HEK293T (cell line): ENCODE measurements at regions of chr1 and their contacts with region 1.

Region 1: DNA sequence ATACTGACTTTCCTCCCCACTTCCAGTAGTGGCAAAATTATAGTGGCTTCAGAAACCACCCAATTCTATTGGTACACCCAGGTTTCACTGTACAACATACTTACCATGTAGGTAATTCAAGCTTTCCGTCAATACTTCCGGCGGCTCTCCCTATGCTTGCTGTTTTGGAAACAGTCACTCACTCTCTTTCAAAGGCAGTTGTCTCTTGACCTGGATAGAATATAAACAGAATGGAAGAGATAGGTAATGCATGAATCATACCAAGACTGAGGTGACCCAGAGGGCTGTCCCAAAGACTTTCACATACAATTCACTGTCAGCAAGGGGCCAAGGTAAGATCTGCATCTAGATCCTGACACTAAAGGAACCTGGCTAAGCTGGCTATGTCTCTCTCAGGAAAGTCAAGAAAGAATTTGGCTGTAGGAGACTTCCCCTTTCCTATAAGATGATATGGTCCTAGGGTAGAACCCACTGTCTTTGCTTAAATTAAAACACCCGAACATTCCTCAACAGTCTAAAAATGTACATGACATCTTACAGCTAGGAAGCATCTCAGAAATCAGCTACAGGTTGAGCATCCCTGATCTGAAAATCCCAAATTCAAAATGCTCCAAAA is 59.6 kb downstream of the LUZP1 start:
- DNase-seq: no peak

Region 2: DNA sequence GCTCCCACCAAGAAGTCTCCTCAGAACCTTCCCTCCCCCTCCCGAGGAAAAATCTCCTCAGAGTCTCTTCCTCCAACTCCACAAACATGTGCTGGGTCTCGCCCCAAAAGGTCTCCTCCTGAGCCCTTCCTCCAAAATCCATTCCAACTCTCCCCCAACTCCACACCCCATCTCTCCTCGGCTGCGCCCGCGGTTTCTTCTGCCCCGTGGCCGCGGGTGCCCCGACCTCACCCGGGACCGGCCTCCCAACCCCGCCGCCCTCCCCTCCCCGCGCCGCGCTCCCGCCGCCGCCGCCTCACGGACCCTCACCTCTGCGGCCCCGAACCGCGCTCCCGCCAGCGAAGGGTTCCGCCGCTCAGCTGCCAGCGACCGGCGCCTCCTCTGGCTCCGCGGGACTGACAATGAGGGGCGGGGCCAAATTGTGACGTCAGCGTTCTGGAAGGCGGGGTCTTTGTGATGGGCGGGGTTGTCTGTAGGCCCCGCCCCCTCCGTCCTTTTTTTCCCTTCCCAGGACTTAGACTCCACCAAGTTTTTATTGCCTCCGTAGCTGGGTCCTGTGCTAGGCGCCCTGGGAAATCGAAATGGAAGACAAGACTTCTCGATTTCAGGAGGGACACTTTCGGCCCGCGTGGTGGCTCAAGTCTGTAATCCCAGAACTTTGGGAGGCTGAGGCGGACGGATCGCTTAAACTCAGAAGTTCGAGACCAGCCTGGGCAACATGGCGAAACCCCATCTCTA is 59.6 kb after region 1 on chr1 and contains the start of gene LUZP1:
- CTCF ChIA-PET with region 1: interaction called, 3 read pairs
- POLR2A ChIA-PET with region 1: interaction called, 10 read pairs
- DNase-seq: peak; percentile 84